Colonic mucosa (tissue), 4 donors: ENCODE measurements at regions of chr14 and their contacts with region 1.

Region 1: DNA sequence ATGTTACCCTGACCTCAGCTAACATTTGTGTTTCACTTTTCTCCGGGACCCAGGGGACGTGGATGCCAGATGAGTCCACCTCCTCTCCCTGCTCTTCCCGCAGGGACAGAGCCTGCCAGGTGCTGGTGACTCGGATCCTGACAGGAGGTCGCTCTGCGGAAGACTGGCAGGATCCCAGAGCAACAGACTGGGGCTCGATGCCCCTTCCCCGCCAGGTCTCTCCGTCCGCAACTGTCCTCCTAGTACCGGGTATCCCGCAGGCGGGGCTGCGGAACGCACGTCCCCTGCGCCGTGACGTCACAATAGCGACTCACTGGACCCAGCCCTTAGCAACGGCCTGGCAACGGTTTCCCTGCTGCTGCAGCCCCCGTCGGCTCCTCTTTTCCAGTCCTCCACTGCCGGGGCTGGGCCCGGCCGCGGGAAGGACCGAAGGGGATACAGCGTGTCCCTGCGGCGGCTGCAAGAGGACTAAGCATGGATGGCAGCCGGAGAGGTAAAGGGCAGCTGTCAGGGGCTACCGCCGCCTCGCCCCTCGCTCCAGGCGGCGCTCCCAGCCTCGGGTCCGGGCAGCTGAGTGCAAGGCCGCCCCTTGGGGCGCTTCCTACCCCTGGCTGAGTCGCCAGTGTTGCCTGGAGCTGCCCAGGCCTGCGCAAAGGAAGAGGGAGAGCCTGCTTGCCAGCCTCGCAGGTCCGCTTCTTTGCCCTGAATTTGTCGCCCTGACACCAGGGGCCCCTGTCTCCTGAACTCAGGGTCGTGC is at the start of gene SPATA7:
- DNase-seq: peak; percentile 95
- H3K4me3 ChIP-seq: peak within 1 kb of the TSS; percentile 96
- H3K27ac ChIP-seq: peak within 1 kb of the TSS; percentile 67
- H3K4me1 ChIP-seq: no peaks in the 10 kb centered on the region
- H3K27me3 ChIP-seq: no peaks in the 10 kb centered on the region
- CTCF ChIP-seq: no peak
- total RNA-seq, gene SPATA7: 3.9 to 5.3 TPM

Region 2: DNA sequence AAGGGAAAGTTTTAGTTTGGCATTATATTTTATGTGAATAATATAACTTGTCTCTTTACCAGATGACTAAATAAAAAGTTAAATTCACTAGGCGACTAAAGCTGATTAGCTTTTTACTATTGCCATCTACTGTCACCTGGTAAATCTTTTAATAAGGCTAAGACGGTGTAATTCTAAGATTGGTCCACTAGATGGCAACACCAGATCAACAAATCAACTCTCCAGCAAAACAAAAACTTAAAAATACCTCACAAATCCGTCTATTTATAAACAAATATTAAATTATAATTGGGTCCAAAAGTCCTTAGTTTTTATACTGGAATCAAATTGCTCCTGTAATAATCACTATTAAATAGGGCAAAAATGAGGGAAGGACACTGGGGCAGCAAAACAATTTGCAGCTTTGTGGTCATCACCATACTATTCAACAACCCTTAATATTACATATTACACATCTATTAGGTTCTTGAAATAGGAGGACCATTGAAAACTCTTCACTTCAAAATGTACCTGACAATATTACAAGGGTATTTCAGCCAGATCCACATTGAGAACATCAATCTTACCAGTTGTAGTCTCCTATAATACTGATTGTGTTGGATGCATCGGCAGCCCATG is 440.4 kb before region 1 on chr14:
- intact Hi-C with region 1: loop called (anchors 10 kb)
- DNase-seq: no peak
- H3K4me3 ChIP-seq: no peak overlapping the region
- H3K27ac ChIP-seq: no peak overlapping the region
- H3K4me1 ChIP-seq: no peaks in the 10 kb centered on the region
- H3K27me3 ChIP-seq: no peaks in the 10 kb centered on the region
- CTCF ChIP-seq: peak; percentile 59

Region 3: DNA sequence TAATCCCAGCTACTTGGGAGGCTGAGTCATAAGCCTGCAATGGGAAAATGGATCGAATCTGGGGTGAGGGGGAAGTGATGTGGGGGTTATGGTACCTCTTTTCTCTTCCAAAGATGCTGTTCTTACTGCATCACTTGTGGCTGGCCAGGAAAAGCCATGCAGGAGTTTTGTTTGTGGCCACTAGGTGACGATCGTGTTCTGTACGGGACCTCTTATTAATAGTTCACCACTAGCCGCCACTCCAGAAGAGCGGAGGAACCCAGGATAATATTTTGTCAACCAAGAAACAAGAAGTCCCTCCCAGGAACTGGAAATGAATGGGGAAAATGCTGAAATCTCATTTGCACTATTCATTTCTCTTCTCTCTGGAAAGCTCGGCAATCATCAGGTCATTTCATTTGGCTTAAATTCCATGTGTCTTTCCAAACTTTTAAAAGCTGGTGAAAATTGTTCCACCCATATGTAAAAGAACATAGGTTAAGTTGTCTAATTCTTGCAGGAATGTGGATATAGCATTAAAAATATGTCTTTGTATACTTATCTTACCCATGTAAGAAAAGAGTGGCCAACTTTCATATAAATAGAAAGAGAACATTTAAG is 371.7 kb before region 1 on chr14:
- intact Hi-C with region 1: loop called (anchors 10 kb)
- DNase-seq: peak; percentile 70
- H3K4me3 ChIP-seq: no peak overlapping the region
- H3K27ac ChIP-seq: no peak overlapping the region
- H3K4me1 ChIP-seq: no peaks in the 10 kb centered on the region
- H3K27me3 ChIP-seq: no peaks in the 10 kb centered on the region
- CTCF ChIP-seq: peak; percentile 86